Activated T-helper 1 cell treated with anti-CD3 and anti-CD28 coated beads, Interleukin-12 subunit alpha, Interleukin-12 subunit beta, Interleukin-2, Interleukin-4 antibody, amounts not matched to agents 30 ng/mL and 10 ng/mL and 1 ng/mL, durations not matched to agents 14 hours and 24 hours and 36 hours (primary cell): ENCODE measurements at regions of chr18 and their contacts with region 1.

Region 1: GRCh38 chr18:75884728-75885127 is 457.2 kb upstream of the SMIM21 start:
- DNase-seq: no peak
- H3K4me3 Mint-ChIP-seq: no peak overlapping the region
- H3K27ac Mint-ChIP-seq: no peak overlapping the region
- H3K4me1 Mint-ChIP-seq: no peaks in the 10 kb centered on the region
- H3K27me3 Mint-ChIP-seq: no peaks in the 10 kb centered on the region

Region 2: GRCh38 chr18:75937306-75937705 is 52.6 kb after region 1 on chr18:
- intact Hi-C with region 1: no loop called
- DNase-seq: no peak
- H3K4me3 Mint-ChIP-seq: no peak overlapping the region
- H3K27ac Mint-ChIP-seq: no peak overlapping the region
- H3K4me1 Mint-ChIP-seq: no peaks in the 10 kb centered on the region
- H3K27me3 Mint-ChIP-seq: no peaks in the 10 kb centered on the region

Region 3: DNA sequence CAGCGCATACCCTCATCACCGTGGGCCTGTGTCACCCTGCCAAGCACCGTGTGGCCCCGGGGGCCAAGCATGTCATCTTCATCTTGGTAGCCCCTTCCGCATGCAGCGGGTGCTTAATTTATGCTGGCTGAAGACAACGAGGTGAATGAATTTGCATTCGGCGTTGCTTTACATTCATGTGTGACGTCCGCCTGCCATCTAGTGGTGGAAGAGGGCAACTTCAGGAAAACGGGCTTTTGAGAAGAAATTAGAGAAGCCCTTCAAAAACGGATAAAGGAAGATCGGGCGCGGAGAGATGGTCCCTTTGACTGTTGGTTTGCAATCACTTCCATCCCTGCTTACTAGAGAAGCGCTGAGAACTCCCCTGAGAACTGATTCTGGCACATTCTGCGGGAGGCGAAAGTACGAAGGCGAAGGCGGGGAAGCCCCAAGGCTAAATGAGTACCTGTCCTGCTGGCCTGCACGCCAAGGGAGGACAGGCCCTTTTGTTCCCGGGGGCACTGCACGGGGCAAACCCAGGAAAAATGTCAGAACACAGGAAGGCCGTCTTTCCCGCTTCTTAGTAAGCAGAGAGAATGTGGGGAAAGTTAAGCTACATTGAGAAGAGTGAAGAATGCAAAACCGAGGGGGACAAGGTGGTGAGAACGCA is 464.5 kb after region 1 on chr18:
- intact Hi-C with region 1: loop called (anchors 2 kb)
- DNase-seq: peak; percentile 41
- H3K4me3 Mint-ChIP-seq: peak overlapping the region; percentile 27
- H3K27ac Mint-ChIP-seq: no peak overlapping the region
- H3K4me1 Mint-ChIP-seq: peaks cover 7% of the 10 kb centered on the region
- H3K27me3 Mint-ChIP-seq: peaks cover 2% of the 10 kb centered on the region